ENCODE measurements at regions of chr2 and their contacts with region 1.

Region 1: DNA sequence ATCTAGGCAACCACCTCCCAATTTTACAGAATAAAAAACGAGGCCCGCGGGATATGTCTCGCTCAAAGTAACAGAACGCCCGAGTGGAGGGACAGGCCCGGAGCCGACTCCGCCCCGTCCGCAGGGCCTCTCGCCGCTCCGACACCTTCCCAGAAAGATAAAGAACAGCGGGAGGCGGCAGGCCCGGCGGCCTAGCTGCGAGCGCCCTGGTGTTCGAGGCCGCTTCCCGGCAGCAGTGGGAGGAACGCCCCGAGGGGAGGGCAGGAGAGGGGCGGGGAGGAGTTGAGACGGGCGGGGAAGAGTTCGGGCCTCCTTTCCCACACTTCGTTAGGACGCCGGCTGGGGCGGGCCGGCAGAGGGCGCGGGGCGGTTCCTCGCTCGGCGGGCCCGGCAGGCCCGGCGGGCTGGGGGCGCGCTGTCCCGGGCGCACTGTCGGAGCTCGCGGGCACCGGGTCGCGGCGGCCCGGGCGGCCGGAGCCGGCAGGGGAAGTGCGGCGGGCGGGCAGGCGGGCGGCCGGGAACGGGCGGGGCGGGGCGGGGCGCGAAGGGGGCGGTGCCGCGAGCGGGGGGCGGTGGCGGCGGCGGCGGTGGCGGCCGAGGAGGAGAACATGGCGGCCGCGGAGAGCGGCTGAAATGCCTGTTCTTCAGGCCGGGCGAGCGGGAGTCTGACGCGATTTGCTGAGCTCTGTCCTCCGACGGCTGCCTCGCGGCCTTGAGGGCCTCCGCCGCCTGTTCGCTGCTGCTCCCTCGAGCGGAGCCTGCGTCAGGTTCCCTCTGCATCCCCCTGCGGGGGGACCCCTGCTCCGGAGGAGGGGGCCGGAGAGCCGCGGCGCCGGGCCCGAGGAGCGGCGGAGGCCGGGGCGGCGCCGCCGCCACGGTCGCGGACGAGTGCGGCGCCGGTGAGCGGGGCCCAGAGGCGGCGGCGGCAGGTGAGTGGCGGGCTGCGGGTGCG is at the start of gene NCOA1:
- DNase-seq: peak; percentile 83 to 95 (median 88)
- ATAC-seq: peak; percentile 85
- H3K4me3 ChIP-seq: peak within 1 kb of the TSS; percentile 60
- H3K4me3 Mint-ChIP-seq: peak within 1 kb of the TSS; percentile 92
- H3K27ac ChIP-seq: peak within 1 kb of the TSS; percentile 76 to 81
- H3K27ac Mint-ChIP-seq: peak within 1 kb of the TSS; percentile 94
- H3K4me1 ChIP-seq: peaks cover 34% of the 10 kb centered on the region
- H3K4me1 Mint-ChIP-seq: peaks cover 66% of the 10 kb centered on the region
- H3K27me3 ChIP-seq: no peaks in the 10 kb centered on the region
- H3K27me3 Mint-ChIP-seq: no peaks in the 10 kb centered on the region
- CTCF ChIP-seq: no peak
- total RNA-seq, gene NCOA1: 35.5 to 40.6 TPM

Region 2: DNA sequence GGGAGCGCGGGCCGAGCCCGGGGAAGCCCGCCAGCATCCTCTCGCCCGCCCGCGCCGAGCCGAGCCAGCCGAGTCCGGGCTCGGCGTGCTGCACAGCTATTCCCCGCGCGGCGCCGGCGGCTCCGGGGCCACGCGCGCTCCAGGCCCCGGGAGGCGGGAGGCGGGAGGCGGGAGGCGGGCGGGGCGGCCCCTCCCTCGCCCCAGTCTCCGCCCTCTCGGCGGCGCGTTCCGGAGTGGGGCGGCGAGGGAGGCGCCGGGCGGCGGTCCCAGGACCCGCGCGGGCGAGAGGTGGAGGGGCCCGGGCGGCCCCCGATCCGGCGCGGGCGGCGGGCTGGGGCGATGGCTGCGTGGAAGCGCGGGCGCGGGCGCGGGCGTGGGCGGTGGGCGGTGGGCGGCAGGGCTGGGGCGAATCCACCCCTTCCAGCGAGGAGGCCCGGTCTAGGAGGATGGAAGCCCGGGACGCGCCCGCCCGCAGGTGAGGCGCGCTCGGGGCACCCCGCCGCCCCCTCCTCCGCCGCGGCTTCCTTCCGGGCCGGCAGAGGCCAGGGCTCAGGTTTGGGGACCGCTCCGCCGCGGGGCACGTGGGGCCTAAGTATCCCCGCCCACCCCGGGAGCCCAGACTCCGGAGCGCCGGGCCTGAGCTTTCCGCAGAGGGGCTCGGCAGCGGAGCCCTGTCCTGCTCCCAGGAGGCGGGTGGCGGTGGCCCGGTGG is 429.3 kb after region 1 on chr2 and contains the start of gene ADCY3:
- CTCF ChIA-PET with region 1: no interaction called
- POLR2A ChIA-PET with region 1: no interaction called
- intact Hi-C with region 1: loop called in 1 of 2 experiments (anchors 5 kb)
- DNase-seq: peak; percentile 26 to 85 (median 52)
- ATAC-seq: peak; percentile 62
- H3K4me3 ChIP-seq: peak within 1 kb of the TSS; percentile 60
- H3K4me3 Mint-ChIP-seq: peak within 1 kb of the TSS; percentile 97
- H3K27ac ChIP-seq: peak within 1 kb of the TSS in 1 of 2 donors; percentile 40
- H3K27ac Mint-ChIP-seq: peak within 1 kb of the TSS; percentile 69
- H3K4me1 ChIP-seq: peaks cover 37% of the 10 kb centered on the region
- H3K4me1 Mint-ChIP-seq: peaks cover 34% of the 10 kb centered on the region
- H3K27me3 ChIP-seq: no peaks in the 10 kb centered on the region
- H3K27me3 Mint-ChIP-seq: no peaks in the 10 kb centered on the region
- CTCF ChIP-seq: no peak
- total RNA-seq, gene ADCY3: 28.1 to 31.4 TPM